ENCODE measurements at regions of chr6 and their contacts with region 1.

Region 1: GRCh38 chr6:36196880-36197548 is 470 bp downstream of the BRPF3 start:
- DNase-seq: peak; percentile 97 to 99
- H3K4me3 ChIP-seq: peak overlapping the region; percentile 77 to 82
- H3K27ac ChIP-seq: peak overlapping the region; percentile 82 to 91
- H3K4me1 ChIP-seq: peaks cover 0 to 33% (median 17%) of the 10 kb centered on the region in 4 donors
- H3K27me3 ChIP-seq: no peaks in the 10 kb centered on the region
- CTCF ChIP-seq: no peak

Region 2: DNA sequence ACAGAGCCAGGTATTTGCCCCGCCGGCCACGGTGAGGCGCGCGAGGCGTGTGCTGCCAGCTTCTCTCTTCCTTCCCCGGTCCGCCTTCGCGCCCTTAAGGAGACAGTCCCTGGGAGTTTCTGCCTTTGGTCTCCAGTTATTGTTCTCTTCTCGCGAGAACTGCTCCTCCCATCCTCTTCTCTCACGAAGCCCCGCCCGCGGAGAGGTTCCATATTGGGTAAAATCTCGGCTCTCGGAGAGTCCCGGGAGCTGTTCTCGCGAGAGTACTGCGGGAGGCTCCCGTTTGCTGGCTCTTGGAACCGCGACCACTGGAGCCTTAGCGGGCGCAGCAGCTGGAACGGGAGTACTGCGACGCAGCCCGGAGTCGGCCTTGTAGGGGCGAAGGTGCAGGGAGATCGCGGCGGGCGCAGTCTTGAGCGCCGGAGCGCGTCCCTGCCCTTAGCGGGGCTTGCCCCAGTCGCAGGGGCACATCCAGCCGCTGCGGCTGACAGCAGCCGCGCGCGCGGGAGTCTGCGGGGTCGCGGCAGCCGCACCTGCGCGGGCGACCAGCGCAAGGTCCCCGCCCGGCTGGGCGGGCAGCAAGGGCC is 169.4 kb before region 1 on chr6 and contains the start of gene MAPK14:
- intact Hi-C with region 1: loop called (anchors 5 kb)
- DNase-seq: peak; percentile 100
- H3K4me3 ChIP-seq: peak within 1 kb of the TSS; percentile 93 to 94
- H3K27ac ChIP-seq: peak within 1 kb of the TSS; percentile 85 to 87
- H3K4me1 ChIP-seq: peaks cover 0 to 49% (median 11%) of the 10 kb centered on the region in 4 donors
- H3K27me3 ChIP-seq: peaks cover 0 to 10% of the 10 kb centered on the region in 2 donors
- CTCF ChIP-seq: peak; percentile 90 to 98

Region 3: GRCh38 chr6:36123257-36124139 is 73.5 kb before region 1 on chr6:
- intact Hi-C with region 1: loop called (anchors 1 kb)
- DNase-seq: peak; percentile 81 to 89
- H3K4me3 ChIP-seq: no peak overlapping the region
- H3K27ac ChIP-seq: no peak overlapping the region
- H3K4me1 ChIP-seq: peaks cover 0 to 19% (median 5%) of the 10 kb centered on the region in 4 donors
- H3K27me3 ChIP-seq: peaks cover 0 to 32% of the 10 kb centered on the region in 2 donors
- CTCF ChIP-seq: peak; percentile 67 to 68

Region 4: DNA sequence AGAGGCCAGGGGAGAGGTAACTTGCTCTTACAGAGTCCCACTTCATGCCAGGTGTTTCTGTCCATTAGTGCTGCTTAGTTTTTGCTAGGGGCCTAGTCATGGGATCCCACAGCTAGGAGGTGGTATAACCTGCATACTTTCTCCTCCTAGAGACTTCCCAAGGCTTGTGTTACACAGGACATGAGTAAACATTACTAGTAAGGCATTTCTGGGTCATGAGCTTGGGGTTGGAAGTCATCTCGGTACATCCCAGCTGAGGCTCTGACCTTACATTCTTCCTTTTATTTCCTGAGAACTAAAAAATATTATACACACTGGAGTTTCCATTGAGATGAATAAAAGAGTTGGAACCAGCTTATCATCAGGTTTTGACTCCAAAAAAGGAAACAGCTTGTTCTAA is 52.0 kb after region 1 on chr6:
- intact Hi-C with region 1: no loop called
- DNase-seq: no peak
- H3K4me3 ChIP-seq: no peak overlapping the region
- H3K27ac ChIP-seq: no peak overlapping the region
- H3K4me1 ChIP-seq: peaks cover 0 to 12% (median 0%) of the 10 kb centered on the region in 4 donors
- H3K27me3 ChIP-seq: no peaks in the 10 kb centered on the region
- CTCF ChIP-seq: no peak

Measured in tibial artery (tissue), 4 donors.